ENCODE measurements at regions of chr3 and their contacts with region 1.

Region 1: GRCh38 chr3:141876381-141876890 is at the start of gene ATP1B3:
- DNase-seq: peak; percentile 30
- H3K4me3 ChIP-seq: peak within 1 kb of the TSS; percentile 86 to 98 (median 94)
- H3K27ac ChIP-seq: peak within 1 kb of the TSS; percentile 98 to 100 (median 100)
- H3K4me1 ChIP-seq: peaks cover 16 to 53% (median 20%) of the 10 kb centered on the region in 3 donors
- H3K27me3 ChIP-seq: no peaks in the 10 kb centered on the region
- CTCF ChIP-seq: peak in 1 of 6 experiments; percentile 15
- POLR2A ChIP-seq: peak in 3 of 4 donors; percentile 77 to 96 (median 93)
- total RNA-seq, gene ATP1B3: 61.0 to 160 (median 126) TPM

Region 2: DNA sequence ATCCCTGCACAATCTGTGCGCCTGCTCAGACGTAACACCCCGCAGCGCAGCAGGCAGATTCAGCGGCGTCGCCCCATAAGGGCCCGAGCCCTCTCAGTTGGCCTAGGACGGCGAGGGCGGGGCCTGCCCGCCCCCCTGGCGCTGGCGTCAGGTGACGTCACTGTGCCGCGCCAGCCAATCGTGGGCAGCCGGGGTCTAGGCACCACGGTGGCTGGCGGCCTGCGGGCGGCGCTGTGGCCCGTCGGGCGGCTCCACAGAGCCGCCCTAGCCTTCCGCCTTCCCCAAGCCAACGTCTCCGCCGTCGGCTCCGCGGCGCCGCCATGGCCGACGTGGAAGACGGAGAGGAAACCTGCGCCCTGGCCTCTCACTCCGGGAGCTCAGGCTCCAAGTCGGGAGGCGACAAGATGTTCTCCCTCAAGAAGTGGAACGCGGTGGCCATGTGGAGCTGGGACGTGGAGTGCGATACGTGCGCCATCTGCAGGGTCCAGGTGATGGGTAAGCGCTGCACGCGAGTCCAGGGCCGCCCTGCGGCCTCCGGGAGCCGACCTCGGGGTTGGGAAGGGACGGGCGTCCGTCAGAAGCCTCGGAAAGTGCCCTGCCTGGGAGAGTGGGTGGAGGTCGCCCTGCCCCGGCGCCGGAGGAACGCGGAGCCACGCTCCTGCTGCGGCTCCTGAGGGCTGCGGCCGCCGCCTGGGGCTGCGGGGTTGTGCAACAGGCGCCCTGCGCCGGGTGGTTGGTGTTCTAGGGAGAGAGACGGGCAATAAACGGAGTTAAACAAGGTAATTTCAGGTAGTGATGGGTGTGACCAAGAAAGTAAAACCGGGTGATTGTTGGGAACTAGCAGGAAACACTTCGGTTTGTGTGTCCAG is 138.2 kb before region 1 on chr3 and contains the start of gene RNF7:
- intact Hi-C with region 1: loop called (anchors 2 kb)
- DNase-seq: peak; percentile 75
- H3K4me3 ChIP-seq: peak within 1 kb of the TSS; percentile 85 to 93 (median 92)
- H3K27ac ChIP-seq: peak within 1 kb of the TSS; percentile 94 to 99 (median 96)
- H3K4me1 ChIP-seq: peaks cover 0 to 46% (median 21%) of the 10 kb centered on the region in 3 donors
- H3K27me3 ChIP-seq: no peaks in the 10 kb centered on the region
- CTCF ChIP-seq: peak; percentile 90 to 99 (median 98)
- POLR2A ChIP-seq: peak in 2 of 4 donors; percentile 41 to 75
- total RNA-seq, gene RNF7: 54.4 to 103 (median 92.4) TPM

Measured in esophagus squamous epithelium (tissue), 5 donors.